ENCODE measurements at regions of chr22 and their contacts with region 1.

Region 1: DNA sequence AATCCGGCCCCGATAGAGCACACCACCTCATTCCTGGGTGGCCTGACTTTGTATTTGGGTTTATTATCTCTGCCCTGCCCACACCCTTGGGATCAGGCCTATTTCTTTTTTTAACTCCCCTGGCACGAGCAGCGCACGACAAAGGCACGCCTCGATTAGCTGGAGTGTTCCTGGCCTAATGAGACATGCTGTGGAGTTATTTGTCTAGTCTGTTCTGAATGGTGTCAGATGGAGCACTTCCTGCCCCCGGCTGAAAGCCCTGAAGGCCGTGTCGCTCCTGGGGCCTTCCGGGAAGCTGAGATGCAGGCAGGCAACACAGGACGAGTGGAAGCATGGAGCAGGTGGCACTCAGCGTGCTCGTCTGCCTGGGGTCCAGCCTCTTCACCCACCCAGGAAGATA is 47.1 kb downstream of the LARGE1 start:
- DNase-seq: peak; percentile 83

Region 2: DNA sequence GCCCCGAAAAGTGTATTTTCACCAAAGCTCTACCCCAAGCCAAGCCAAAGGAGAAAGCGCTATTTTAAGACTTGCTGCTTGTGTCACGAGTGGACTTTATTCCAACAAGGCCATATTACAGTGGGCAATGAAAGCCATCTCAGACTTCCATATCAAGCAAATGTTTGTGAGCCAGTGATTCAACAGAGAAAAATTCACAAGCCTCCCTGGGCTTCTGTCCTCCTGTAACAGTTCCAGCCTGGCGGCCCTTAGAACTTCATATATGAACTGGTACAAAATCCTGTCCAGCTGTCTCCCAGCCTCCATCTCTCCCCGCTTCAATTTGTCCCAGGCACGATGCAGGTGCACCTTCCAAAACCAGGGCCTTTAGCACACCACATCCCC is 35.9 kb after region 1 on chr22:
- intact Hi-C with region 1: loop called (anchors 5 kb)
- DNase-seq: no peak

Region 3: GRCh38 chr22:34294991-34295390 is 421.8 kb after region 1 on chr22:
- intact Hi-C with region 1: no loop called
- DNase-seq: no peak

Measured in cardiac septum (tissue), 1 donor.